Natural killer cell (primary cell): ENCODE measurements at regions of chr19 and their contacts with region 1.

Region 1: DNA sequence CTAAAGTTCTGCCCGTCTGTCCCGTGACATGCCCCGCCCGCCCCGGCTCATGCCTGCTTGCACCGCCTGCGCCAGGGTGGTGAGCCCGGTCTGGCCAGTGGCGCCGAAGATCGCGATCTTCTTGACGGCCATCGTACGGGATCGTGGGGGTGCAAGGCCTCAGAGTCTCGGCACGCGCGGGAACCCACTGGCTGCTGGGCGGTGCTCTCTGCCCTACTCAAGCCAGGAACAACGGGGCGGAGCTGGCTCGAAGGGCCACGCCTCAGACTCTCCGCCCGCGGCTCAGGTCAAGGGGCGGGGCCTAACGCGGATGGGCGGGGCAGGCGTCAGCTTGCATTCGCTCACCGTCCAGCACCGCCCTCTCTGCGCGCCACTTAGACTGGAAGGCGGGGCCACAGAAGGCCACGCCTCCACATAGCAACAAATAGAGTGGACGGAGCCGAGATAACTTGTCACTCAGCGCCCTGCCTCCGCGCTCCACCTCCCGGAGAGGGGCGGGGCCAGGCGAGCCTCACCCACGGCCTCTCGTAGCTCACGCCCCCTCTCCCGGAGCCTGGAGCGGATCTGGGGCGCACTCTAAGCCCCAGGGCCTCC is at the start of gene BLVRB:
- DNase-seq: peak; percentile 100
- ATAC-seq: peak; percentile 62 to 87 (median 69)
- H3K4me3 ChIP-seq: peak within 1 kb of the TSS; percentile 70
- H3K4me3 Mint-ChIP-seq: peak within 1 kb of the TSS; percentile 84
- H3K27ac ChIP-seq: peak within 1 kb of the TSS; percentile 81
- H3K27ac Mint-ChIP-seq: peak within 1 kb of the TSS; percentile 88 to 93
- H3K4me1 ChIP-seq: peaks cover 37% of the 10 kb centered on the region
- H3K4me1 Mint-ChIP-seq: peaks cover 23 to 26% of the 10 kb centered on the region in 2 donors
- H3K27me3 ChIP-seq: peaks cover 6% of the 10 kb centered on the region
- H3K27me3 Mint-ChIP-seq: peaks cover 8 to 13% of the 10 kb centered on the region in 2 donors
- CTCF ChIP-seq: no peak
- total RNA-seq, gene BLVRB: 16.8 to 25.2 (median 18.3) TPM

Region 2: DNA sequence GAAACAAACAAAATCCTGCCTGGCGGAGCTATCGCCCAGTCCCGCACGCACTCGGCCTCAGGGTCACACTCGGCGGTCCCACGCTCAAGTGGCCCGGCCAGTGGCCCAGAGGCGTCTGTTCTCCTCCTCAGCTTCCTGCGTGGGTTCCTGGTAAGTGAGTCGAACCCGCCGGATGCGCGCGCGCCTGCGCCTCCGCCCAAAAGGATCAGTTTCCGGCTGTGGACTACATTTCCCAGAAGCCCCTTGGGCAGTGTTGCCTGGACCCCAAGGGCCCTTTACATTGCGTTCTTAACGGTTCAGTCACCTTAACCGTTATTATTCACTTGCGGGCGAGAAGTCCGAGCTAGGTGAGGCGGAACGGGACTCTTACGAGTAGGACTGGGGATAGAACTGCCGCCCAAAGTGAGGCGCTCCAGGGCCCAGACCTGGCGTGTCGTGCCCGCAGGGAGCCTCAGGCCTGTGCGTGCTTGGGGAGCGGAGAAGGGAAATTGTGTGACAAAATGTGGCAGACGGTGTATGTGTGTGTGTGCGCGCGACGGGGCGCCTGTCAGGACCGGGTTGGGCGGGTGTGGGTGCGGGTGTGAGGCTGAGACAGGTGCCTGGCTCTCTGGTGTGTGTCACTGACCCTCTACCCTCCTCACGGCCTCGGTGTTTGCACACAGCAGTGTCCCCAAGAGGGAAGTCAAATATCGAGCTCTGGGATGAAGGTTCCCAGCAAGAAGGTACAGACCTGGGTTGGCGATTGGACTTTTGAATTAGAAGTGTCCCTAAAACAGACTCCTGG is 468.7 kb before region 1 on chr19 and contains the start of gene ZNF546:
- intact Hi-C with region 1: loop called (anchors 5 kb)
- DNase-seq: peak; percentile 78 to 94
- ATAC-seq: peak; percentile 84 to 94 (median 89)
- H3K4me3 ChIP-seq: peak within 1 kb of the TSS; percentile 83
- H3K4me3 Mint-ChIP-seq: peak within 1 kb of the TSS; percentile 91
- H3K27ac ChIP-seq: peak within 1 kb of the TSS; percentile 86
- H3K27ac Mint-ChIP-seq: peak within 1 kb of the TSS; percentile 88 to 91
- H3K4me1 ChIP-seq: peaks cover 21% of the 10 kb centered on the region
- H3K4me1 Mint-ChIP-seq: peaks cover 29 to 30% of the 10 kb centered on the region in 2 donors
- H3K27me3 ChIP-seq: no peaks in the 10 kb centered on the region
- H3K27me3 Mint-ChIP-seq: no peaks in the 10 kb centered on the region
- CTCF ChIP-seq: no peak
- total RNA-seq, gene ZNF546: 3.3 to 4.0 (median 3.8) TPM

Region 3: DNA sequence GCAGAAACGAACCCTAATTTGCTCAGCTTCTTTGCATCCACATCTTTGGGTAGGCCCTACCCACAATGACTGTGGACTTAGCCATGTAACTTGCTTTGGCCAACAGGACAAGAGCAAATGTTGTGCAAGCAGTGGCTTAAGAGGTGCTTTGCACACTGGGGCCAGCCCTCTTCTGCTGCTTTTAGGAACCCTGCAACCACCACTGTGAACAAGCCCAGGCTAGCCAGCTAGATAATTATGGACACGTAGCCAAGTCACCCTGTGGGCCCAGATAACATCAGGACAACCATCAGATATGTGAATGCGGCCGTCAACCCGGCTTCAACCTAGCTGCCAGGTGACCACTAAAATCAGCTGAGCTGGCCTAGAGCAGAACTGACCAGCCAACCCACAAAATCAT is 134.6 kb before region 1 on chr19:
- intact Hi-C with region 1: no loop called
- DNase-seq: no peak
- ATAC-seq: peak in 2 of 3 donors; percentile 8 to 94
- H3K4me3 ChIP-seq: no peak overlapping the region
- H3K4me3 Mint-ChIP-seq: no peak overlapping the region
- H3K27ac ChIP-seq: no peak overlapping the region
- H3K27ac Mint-ChIP-seq: no peak overlapping the region
- H3K4me1 ChIP-seq: no peaks in the 10 kb centered on the region
- H3K4me1 Mint-ChIP-seq: no peaks in the 10 kb centered on the region
- H3K27me3 ChIP-seq: no peaks in the 10 kb centered on the region
- H3K27me3 Mint-ChIP-seq: no peaks in the 10 kb centered on the region
- CTCF ChIP-seq: no peak

Region 4: GRCh38 chr19:40425450-40426287 is 40.0 kb before region 1 on chr19 and contains the start of gene SERTAD1:
- intact Hi-C with region 1: loop called (anchors 1 kb)
- DNase-seq: peak; percentile 100
- ATAC-seq: peak; percentile 88 to 98 (median 88)
- H3K4me3 ChIP-seq: peak within 1 kb of the TSS; percentile 71
- H3K4me3 Mint-ChIP-seq: peak within 1 kb of the TSS; percentile 94
- H3K27ac ChIP-seq: peak within 1 kb of the TSS; percentile 95
- H3K27ac Mint-ChIP-seq: peak within 1 kb of the TSS; percentile 91 to 94
- H3K4me1 ChIP-seq: peaks cover 26% of the 10 kb centered on the region
- H3K4me1 Mint-ChIP-seq: peaks cover 21 to 31% of the 10 kb centered on the region in 2 donors
- H3K27me3 ChIP-seq: no peaks in the 10 kb centered on the region
- H3K27me3 Mint-ChIP-seq: no peaks in the 10 kb centered on the region
- CTCF ChIP-seq: peak; percentile 73
- total RNA-seq, gene SERTAD1: 31.2 to 53.5 (median 38.7) TPM

Region 5: DNA sequence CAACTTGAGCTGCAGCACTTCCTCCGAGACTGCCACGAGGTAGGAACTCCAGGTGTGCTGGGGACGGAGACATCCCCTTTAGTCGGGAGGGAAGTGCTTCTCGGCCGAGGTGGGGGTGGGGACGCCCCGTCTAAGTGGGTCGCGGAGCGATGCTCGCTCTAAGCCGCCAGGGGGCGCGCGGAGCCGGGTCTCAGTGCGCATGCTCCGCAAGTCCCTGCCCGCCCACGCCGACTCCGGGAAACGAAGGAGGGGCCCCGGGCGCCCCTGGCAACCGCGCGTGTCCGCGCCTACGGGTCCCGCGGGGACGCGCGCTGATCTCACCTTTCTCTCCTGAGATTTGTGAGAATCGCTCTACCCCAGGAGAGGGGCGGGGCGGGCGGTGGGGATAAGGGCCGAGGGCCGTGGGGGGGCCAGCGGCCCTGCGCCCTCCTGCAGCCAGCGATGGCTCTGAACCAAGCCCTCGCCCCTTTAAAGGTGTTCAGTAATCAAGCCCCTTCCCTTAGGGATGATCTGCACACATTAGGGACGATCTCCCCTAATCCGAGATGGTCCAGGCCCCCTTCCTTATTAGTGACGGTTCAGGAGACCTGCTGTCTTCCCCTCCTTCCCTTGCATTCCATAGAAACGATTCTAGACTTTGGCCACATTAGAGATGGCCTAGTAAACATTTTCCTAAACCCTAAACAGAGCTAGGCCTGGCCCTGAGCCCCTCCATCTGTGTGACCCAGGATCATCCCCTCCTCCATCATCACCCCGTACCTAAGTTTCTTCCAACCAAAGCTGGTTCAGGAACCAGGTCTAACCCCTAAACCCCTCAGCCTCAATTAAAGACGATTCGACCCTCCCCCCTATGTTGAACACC is 63.7 kb after region 1 on chr19:
- intact Hi-C with region 1: no loop called
- DNase-seq: peak; percentile 88 to 95
- ATAC-seq: peak; percentile 92 to 95 (median 92)
- H3K4me3 ChIP-seq: peak overlapping the region; percentile 35
- H3K4me3 Mint-ChIP-seq: peak overlapping the region; percentile 73
- H3K27ac ChIP-seq: no peak overlapping the region
- H3K27ac Mint-ChIP-seq: peak overlapping the region in 1 of 2 donors; percentile 64
- H3K4me1 ChIP-seq: peaks cover 15% of the 10 kb centered on the region
- H3K4me1 Mint-ChIP-seq: peaks cover 5 to 22% of the 10 kb centered on the region in 2 donors
- H3K27me3 ChIP-seq: peaks cover 16% of the 10 kb centered on the region
- H3K27me3 Mint-ChIP-seq: peaks cover 18 to 30% of the 10 kb centered on the region in 2 donors
- CTCF ChIP-seq: peak; percentile 90

Region 6: GRCh38 chr19:40598121-40598917 is 132.7 kb after region 1 on chr19:
- intact Hi-C with region 1: loop called (anchors 1 kb)
- DNase-seq: peak; percentile 86 to 91
- ATAC-seq: peak; percentile 71 to 81 (median 76)
- H3K4me3 ChIP-seq: no peak overlapping the region
- H3K4me3 Mint-ChIP-seq: no peak overlapping the region
- H3K27ac ChIP-seq: no peak overlapping the region
- H3K27ac Mint-ChIP-seq: no peak overlapping the region
- H3K4me1 ChIP-seq: peaks cover 71% of the 10 kb centered on the region
- H3K4me1 Mint-ChIP-seq: peaks cover 24 to 53% of the 10 kb centered on the region in 2 donors
- H3K27me3 ChIP-seq: peaks cover 55% of the 10 kb centered on the region
- H3K27me3 Mint-ChIP-seq: peaks cover 14 to 49% of the 10 kb centered on the region in 2 donors
- CTCF ChIP-seq: peak; percentile 96

Region 7: DNA sequence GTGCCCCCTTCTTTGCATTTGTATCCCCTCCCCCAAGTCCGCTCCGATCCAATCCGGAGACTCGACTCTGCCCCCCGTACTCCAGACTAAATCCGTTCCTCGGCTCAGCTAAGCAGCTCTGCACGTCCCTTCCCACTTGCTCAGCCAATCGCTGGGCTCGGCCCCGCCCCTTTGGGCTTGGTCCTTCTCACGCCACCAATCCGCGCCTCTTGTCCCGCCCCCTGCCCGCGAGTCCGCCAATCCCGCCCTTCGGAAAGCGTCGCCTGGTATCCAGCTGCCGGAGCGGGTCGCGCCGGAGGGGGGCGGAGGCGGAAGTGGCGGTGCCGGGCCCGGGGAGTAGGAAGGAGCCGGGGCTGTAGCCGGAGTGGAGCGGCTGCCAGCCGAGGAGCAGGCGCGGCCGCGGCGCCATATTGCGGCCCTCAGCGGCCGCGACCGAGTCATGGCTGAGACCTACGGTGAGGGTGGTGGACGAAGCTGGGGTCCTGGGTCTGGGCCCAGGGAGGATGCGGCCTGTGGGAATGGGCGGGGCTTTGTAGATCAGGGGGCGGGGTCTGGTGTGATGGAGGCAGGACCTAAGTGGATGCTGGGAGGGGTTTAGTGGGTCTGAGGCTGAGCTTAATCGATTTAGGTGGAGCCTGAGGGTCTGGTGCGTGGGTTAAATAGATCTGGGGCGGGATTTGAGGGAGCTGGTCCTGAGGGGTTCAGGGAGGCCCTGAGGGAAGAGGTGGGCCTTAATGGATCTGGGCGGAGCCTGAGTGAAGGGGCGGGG is 312.5 kb after region 1 on chr19 and contains the start of gene RAB4B:
- intact Hi-C with region 1: loop called (anchors 10 kb)
- DNase-seq: peak; percentile 100
- ATAC-seq: peak; percentile 80 to 93 (median 82)
- H3K4me3 ChIP-seq: peak within 1 kb of the TSS; percentile 92
- H3K4me3 Mint-ChIP-seq: peak within 1 kb of the TSS; percentile 97
- H3K27ac ChIP-seq: peak within 1 kb of the TSS; percentile 99
- H3K27ac Mint-ChIP-seq: peak within 1 kb of the TSS; percentile 95 to 96
- H3K4me1 ChIP-seq: peaks cover 26% of the 10 kb centered on the region
- H3K4me1 Mint-ChIP-seq: peaks cover 37 to 51% of the 10 kb centered on the region in 2 donors
- H3K27me3 ChIP-seq: no peaks in the 10 kb centered on the region
- H3K27me3 Mint-ChIP-seq: no peaks in the 10 kb centered on the region
- CTCF ChIP-seq: no peak
- total RNA-seq, gene RAB4B: 97.8 to 99.8 (median 98.6) TPM

Region 8: GRCh38 chr19:41327576-41328156 is 862.0 kb after region 1 on chr19:
- intact Hi-C with region 1: loop called (anchors 1 kb)
- DNase-seq: peak; percentile 89 to 96
- ATAC-seq: peak; percentile 46 to 78 (median 61)
- H3K4me3 ChIP-seq: peak overlapping the region; percentile 25
- H3K4me3 Mint-ChIP-seq: peak overlapping the region; percentile 80
- H3K27ac ChIP-seq: peak overlapping the region; percentile 91
- H3K27ac Mint-ChIP-seq: peak overlapping the region; percentile 94 to 97
- H3K4me1 ChIP-seq: peaks cover 98% of the 10 kb centered on the region
- H3K4me1 Mint-ChIP-seq: peaks cover 83 to 88% of the 10 kb centered on the region in 2 donors
- H3K27me3 ChIP-seq: no peaks in the 10 kb centered on the region
- H3K27me3 Mint-ChIP-seq: no peaks in the 10 kb centered on the region
- CTCF ChIP-seq: no peak